Esophagus muscularis mucosa (tissue), 4 donors: ENCODE measurements at regions of chrX and their contacts with region 1.

Region 1: DNA sequence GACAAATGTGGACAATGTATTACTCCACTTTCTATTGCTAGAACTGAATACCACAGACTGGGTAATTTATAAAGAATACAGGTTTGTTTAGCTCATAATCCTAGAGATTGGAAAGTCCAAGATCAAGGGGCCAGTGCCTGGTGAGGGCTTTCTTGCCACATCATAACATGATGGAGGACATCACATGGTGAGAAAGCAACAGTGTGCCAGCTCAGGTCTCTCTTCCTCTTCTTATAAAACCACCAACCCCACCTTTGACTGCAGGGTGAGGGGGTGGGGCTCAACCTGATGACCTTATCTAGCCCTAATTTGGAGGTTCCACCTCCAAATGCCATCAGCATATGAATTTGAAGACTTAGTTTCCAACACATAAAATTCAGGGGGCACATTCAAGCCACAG is 105.7 kb upstream of the CXorf66 start:
- DNase-seq: no peak
- H3K4me3 ChIP-seq: no peak overlapping the region
- H3K27ac ChIP-seq: no peak overlapping the region
- H3K4me1 ChIP-seq: no peaks in the 10 kb centered on the region
- H3K27me3 ChIP-seq: no peaks in the 10 kb centered on the region
- CTCF ChIP-seq: no peak
- EP300 ChIP-seq: no peak
- POLR2A ChIP-seq: no peak

Region 2: GRCh38 chrX:140141444-140142029 is 70.5 kb after region 1 on chrX:
- intact Hi-C with region 1: loop called (anchors 1 kb)
- DNase-seq: no peak
- H3K4me3 ChIP-seq: no peak overlapping the region
- H3K27ac ChIP-seq: no peak overlapping the region
- H3K4me1 ChIP-seq: no peaks in the 10 kb centered on the region
- H3K27me3 ChIP-seq: no peaks in the 10 kb centered on the region
- CTCF ChIP-seq: peak; percentile 51 to 61 (median 59)
- EP300 ChIP-seq: no peak
- POLR2A ChIP-seq: no peak